CD4-positive, alpha-beta memory T cell (primary cell): ENCODE measurements at regions of chr10 and their contacts with region 1.

Region 1: DNA sequence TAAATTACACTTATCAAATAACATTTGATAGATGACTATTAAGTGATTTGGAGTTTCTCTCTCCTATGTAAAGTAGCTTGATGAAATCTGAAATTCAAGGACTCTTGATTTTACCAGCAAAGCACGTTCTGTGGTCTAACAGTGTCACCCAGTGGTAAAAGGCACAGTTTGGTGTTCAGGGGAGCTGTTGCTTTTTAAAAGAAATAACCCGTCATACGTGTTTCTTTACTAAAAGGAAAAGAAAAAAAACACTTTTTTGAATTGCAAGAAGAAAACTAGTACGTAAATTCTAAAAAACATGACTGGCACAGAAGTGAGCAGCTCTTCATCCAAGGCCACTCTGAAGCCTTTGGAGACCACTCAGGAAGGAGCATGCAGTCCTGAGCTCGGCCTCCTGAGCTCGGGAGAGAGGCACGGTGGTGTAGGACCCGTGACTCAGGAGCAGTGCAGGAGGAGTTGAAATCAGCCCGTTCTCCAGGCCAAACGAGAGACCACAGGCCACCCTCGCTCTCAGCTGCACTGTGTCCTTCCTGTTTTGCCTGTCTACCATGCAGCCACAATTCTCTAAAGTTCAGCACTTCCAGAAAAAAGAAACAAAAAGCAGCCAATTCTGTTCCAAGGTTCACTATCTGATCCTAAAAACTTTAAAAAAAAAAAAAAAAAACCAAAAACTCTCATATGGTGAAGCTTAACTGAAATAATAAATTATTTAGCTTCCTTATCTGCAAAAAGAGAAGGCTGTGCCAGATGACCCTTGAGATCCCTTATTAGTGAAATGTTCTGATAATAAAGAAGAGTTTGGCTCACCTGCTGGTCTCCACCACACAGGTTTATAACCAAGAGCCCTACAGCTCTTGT is 212.6 kb upstream of the FRMD4A start:
- DNase-seq: peak; percentile 55 to 79 (median 59)
- H3K4me3 ChIP-seq: no peak overlapping the region
- H3K4me3 Mint-ChIP-seq: peak overlapping the region; percentile 30 to 85 (median 70)
- H3K27ac ChIP-seq: peak overlapping the region; percentile 56
- H3K27ac Mint-ChIP-seq: peak overlapping the region; percentile 56 to 94 (median 85)
- H3K4me1 ChIP-seq: peaks cover 97% of the 10 kb centered on the region
- H3K4me1 Mint-ChIP-seq: peaks cover 73 to 96% (median 84%) of the 10 kb centered on the region in 4 donors
- H3K27me3 ChIP-seq: no peaks in the 10 kb centered on the region
- H3K27me3 Mint-ChIP-seq: no peaks in the 10 kb centered on the region

Region 2: DNA sequence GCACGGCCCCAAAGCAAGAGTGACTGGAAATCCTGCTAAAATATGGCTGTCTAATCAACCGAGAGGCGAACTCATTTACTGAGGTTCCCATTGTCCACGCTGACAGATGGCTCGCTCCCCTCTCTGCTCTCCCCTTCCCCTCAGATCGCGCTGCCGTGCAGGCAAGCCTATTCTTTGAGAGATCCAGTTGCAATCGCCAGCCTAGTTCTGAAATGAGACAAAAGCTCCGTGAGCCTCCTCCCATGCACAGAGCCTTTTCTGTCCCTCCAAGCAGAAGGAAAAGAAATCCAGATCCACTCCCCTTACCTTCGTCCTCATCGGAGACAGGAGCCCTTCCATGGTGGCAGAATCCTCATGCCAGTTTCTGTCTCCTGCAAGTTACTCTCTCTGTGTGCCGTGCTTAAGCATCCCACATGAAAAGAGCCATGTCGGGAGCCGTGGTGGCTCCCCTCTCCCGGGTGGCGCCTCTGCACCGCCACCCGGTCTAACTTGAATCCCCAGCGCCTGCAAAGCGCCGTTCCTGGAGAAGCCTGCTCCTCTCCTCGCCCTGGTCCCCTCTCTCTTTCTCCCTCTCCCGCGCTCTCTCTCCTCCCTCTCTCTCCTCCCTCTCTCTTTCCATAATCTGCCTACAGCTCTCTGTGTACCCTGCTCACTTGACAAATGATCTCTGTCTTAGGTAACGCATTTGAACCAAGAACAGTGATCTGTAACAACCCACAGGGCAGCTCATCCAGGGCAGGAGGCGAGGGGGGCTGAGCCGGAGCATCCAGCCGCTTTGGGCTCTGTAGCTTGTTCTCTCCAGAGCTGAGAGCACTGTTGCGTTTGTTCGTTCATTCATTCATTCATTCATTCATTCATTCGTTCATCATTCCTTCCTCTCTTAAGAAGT is 369.3 kb before region 1 on chr10:
- CTCF ChIA-PET with region 1: no interaction called
- POLR2A ChIA-PET with region 1: no interaction called
- intact Hi-C with region 1: no loop called
- DNase-seq: peak in 3 of 5 donors; percentile 20 to 31 (median 31)
- H3K4me3 ChIP-seq: peak overlapping the region in 1 of 2 donors; percentile 58
- H3K4me3 Mint-ChIP-seq: peak overlapping the region; percentile 81 to 95 (median 86)
- H3K27ac ChIP-seq: no peak overlapping the region
- H3K27ac Mint-ChIP-seq: peak overlapping the region; percentile 10 to 58 (median 43)
- H3K4me1 ChIP-seq: peaks cover 12% of the 10 kb centered on the region
- H3K4me1 Mint-ChIP-seq: peaks cover 10 to 18% (median 16%) of the 10 kb centered on the region in 4 donors
- H3K27me3 ChIP-seq: peaks cover 21% of the 10 kb centered on the region
- H3K27me3 Mint-ChIP-seq: peaks cover 47 to 73% of the 10 kb centered on the region in 2 donors

Region 3: DNA sequence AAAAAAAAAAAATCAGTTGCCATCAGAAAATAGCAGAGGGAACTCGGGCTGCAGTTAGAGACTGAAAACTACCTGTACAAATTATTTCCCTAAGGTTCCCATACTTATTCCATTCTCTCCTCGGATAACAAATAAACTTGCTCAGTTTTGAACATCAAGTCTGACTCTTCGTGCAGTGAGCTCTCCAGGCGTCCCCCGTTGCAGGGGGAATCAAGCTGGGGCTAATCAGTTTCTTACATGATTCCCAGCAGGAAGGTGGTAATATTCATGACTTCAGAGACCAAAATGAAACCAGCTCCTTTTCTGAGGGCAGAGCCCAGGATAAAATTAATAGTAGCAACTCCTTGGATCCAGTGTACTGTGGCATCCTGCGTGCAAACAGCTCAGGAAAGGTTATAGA is 347.8 kb before region 1 on chr10:
- CTCF ChIA-PET with region 1: interaction called, 6 read pairs
- POLR2A ChIA-PET with region 1: interaction called, 3 read pairs
- intact Hi-C with region 1: loop called (anchors 5 kb)
- DNase-seq: no peak
- H3K4me3 ChIP-seq: no peak overlapping the region
- H3K4me3 Mint-ChIP-seq: no peak overlapping the region
- H3K27ac ChIP-seq: no peak overlapping the region
- H3K27ac Mint-ChIP-seq: no peak overlapping the region
- H3K4me1 ChIP-seq: no peaks in the 10 kb centered on the region
- H3K4me1 Mint-ChIP-seq: no peaks in the 10 kb centered on the region
- H3K27me3 ChIP-seq: no peaks in the 10 kb centered on the region
- H3K27me3 Mint-ChIP-seq: peaks cover 19 to 37% of the 10 kb centered on the region in 2 donors

Region 4: GRCh38 chr10:14507176-14507575 is 36.1 kb before region 1 on chr10:
- CTCF ChIA-PET with region 1: interaction called, 13 read pairs
- POLR2A ChIA-PET with region 1: interaction called, 3 read pairs
- intact Hi-C with region 1: no loop called
- DNase-seq: peak; percentile 80 to 89 (median 85)
- H3K4me3 ChIP-seq: no peak overlapping the region
- H3K4me3 Mint-ChIP-seq: peak overlapping the region; percentile 26 to 75 (median 67)
- H3K27ac ChIP-seq: peak overlapping the region; percentile 56
- H3K27ac Mint-ChIP-seq: peak overlapping the region; percentile 89 to 99 (median 96)
- H3K4me1 ChIP-seq: peaks cover 39% of the 10 kb centered on the region
- H3K4me1 Mint-ChIP-seq: peaks cover 37 to 40% (median 38%) of the 10 kb centered on the region in 4 donors
- H3K27me3 ChIP-seq: no peaks in the 10 kb centered on the region
- H3K27me3 Mint-ChIP-seq: no peaks in the 10 kb centered on the region

Region 5: GRCh38 chr10:14528450-14528849 is 14.8 kb before region 1 on chr10:
- CTCF ChIA-PET with region 1: interaction called, 11 read pairs
- POLR2A ChIA-PET with region 1: interaction called, 12 read pairs
- intact Hi-C with region 1: no loop called
- DNase-seq: peak; percentile 53 to 72 (median 57)
- H3K4me3 ChIP-seq: no peak overlapping the region
- H3K4me3 Mint-ChIP-seq: peak overlapping the region in 7 of 8 donors; percentile 33 to 77 (median 70)
- H3K27ac ChIP-seq: no peak overlapping the region
- H3K27ac Mint-ChIP-seq: peak overlapping the region; percentile 10 to 94 (median 75)
- H3K4me1 ChIP-seq: peaks cover 97% of the 10 kb centered on the region
- H3K4me1 Mint-ChIP-seq: peaks cover 65 to 96% (median 78%) of the 10 kb centered on the region in 4 donors
- H3K27me3 ChIP-seq: no peaks in the 10 kb centered on the region
- H3K27me3 Mint-ChIP-seq: no peaks in the 10 kb centered on the region

Region 6: GRCh38 chr10:14556285-14556956 is 13.1 kb after region 1 on chr10:
- CTCF ChIA-PET with region 1: interaction called, 49 read pairs
- POLR2A ChIA-PET with region 1: interaction called, 50 read pairs
- intact Hi-C with region 1: no loop called
- DNase-seq: peak in 4 of 5 donors; percentile 34 to 64 (median 47)
- H3K4me3 ChIP-seq: no peak overlapping the region
- H3K4me3 Mint-ChIP-seq: peak overlapping the region; percentile 53 to 87 (median 75)
- H3K27ac ChIP-seq: peak overlapping the region; percentile 65
- H3K27ac Mint-ChIP-seq: peak overlapping the region; percentile 93 to 97 (median 94)
- H3K4me1 ChIP-seq: peaks cover 100% of the 10 kb centered on the region
- H3K4me1 Mint-ChIP-seq: peaks cover 80 to 99% (median 89%) of the 10 kb centered on the region in 4 donors
- H3K27me3 ChIP-seq: no peaks in the 10 kb centered on the region
- H3K27me3 Mint-ChIP-seq: no peaks in the 10 kb centered on the region

Region 7: DNA sequence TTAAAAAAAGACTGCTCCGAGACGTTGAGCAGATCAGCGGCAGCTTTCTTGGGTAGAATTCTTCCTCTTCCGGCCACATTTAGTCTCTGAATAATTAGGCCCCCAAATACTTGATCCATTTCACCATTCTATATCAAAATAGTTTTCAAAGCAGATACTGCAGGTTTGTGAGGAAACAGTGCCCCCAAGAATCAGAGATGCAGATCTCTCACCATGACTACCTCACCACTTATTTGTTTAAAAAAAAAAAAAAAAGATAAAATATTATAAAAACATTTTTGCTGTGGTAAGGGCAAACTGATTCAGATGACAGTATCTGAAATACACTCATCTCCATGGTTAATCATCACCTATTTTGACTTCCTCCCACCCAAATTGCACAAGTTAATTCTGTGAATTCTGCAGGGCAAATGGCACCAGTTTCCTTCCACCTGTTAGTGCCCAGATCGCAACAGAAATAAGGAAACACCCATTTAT is 21.0 kb after region 1 on chr10:
- CTCF ChIA-PET with region 1: interaction called, 35 read pairs
- POLR2A ChIA-PET with region 1: interaction called, 21 read pairs
- intact Hi-C with region 1: no loop called
- DNase-seq: peak; percentile 69 to 82 (median 78)
- H3K4me3 ChIP-seq: peak overlapping the region in 1 of 2 donors; percentile 8
- H3K4me3 Mint-ChIP-seq: peak overlapping the region; percentile 71 to 91 (median 85)
- H3K27ac ChIP-seq: peak overlapping the region; percentile 79
- H3K27ac Mint-ChIP-seq: peak overlapping the region; percentile 90 to 97 (median 96)
- H3K4me1 ChIP-seq: peaks cover 96% of the 10 kb centered on the region
- H3K4me1 Mint-ChIP-seq: peaks cover 71 to 99% (median 85%) of the 10 kb centered on the region in 4 donors
- H3K27me3 ChIP-seq: no peaks in the 10 kb centered on the region
- H3K27me3 Mint-ChIP-seq: no peaks in the 10 kb centered on the region

Region 8: DNA sequence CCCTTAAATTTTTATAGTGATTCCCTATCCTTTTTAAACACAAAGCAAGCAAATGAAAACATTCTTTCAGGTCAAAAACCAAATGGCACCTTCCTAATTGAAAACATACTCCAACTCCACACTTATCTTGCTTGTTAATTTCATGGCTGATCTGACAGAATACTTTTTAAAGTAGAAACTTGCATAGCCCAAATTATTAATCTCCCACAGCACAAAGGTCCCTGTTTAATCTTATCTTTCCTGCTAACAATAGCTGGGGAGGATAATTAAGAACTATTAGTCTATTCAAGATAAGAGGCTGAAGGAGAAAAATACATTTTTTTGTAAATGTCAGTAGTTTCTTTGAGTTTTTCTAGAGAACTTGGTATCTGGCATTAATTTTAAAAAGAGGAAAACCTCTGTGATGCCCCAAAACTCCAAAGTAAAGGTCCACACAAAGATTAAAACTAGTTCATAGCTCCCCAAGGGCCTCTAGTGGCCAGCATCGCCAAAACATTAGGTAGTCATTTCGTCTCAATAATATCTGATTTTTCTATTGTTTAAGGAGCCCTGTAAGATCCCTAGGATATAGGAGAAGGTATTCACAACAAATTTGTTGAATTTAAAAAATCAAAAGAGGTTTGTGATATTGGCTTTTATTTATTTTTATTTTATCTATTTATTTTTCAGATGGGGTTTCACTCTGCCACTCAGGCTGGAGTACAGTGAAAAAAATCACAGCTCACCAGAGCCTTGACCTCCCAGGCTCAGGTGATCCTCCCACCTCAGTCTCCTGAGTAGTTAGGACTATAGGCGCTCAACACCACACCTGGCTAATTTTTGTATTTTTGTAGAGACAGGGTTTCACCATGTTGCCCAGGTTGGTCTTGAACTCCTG is 279.8 kb after region 1 on chr10:
- CTCF ChIA-PET with region 1: interaction called, 45 read pairs
- POLR2A ChIA-PET with region 1: interaction called, 8 read pairs
- intact Hi-C with region 1: no loop called
- DNase-seq: peak in 4 of 5 donors; percentile 39 to 56 (median 41)
- H3K4me3 ChIP-seq: no peak overlapping the region
- H3K4me3 Mint-ChIP-seq: no peak overlapping the region
- H3K27ac ChIP-seq: no peak overlapping the region
- H3K27ac Mint-ChIP-seq: peak overlapping the region in 2 of 7 donors; percentile 18 to 72
- H3K4me1 ChIP-seq: no peaks in the 10 kb centered on the region
- H3K4me1 Mint-ChIP-seq: peaks cover 0 to 14% (median 4%) of the 10 kb centered on the region in 4 donors
- H3K27me3 ChIP-seq: no peaks in the 10 kb centered on the region
- H3K27me3 Mint-ChIP-seq: no peaks in the 10 kb centered on the region